Heart left ventricle (tissue), 16 donors: ENCODE measurements at regions of chr2 and their contacts with region 1.

Region 1: GRCh38 chr2:159807183-159808031 is 9.4 kb upstream of the CD302 start:
- DNase-seq: peak in 2 of 5 donors; percentile 14 to 31
- ATAC-seq: peak in 3 of 4 donors; percentile 48 to 66 (median 61)
- H3K4me3 ChIP-seq: no peak overlapping the region
- H3K27ac ChIP-seq: no peak overlapping the region
- H3K4me1 ChIP-seq: peaks cover 0 to 5% (median 0%) of the 10 kb centered on the region in 12 donors
- H3K27me3 ChIP-seq: no peaks in the 10 kb centered on the region
- CTCF ChIP-seq: peak; percentile 65 to 83 (median 74)
- POLR2A ChIP-seq: no peak

Region 2: GRCh38 chr2:159399811-159400415 is 407.5 kb before region 1 on chr2:
- intact Hi-C with region 1: loop called in 1 of 10 experiments (anchors 10 kb)
- DNase-seq: no peak
- ATAC-seq: no peak
- H3K4me3 ChIP-seq: no peak overlapping the region
- H3K27ac ChIP-seq: no peak overlapping the region
- H3K4me1 ChIP-seq: peaks cover 0 to 6% (median 0%) of the 10 kb centered on the region in 12 donors
- H3K27me3 ChIP-seq: no peaks in the 10 kb centered on the region
- CTCF ChIP-seq: no peak
- POLR2A ChIP-seq: no peak

Region 3: GRCh38 chr2:159557451-159558034 is 249.9 kb before region 1 on chr2:
- intact Hi-C with region 1: loop called in 3 of 10 experiments (anchors 5 to 10 kb)
- DNase-seq: no peak
- ATAC-seq: peak; percentile 58 to 76 (median 70)
- H3K4me3 ChIP-seq: no peak overlapping the region
- H3K27ac ChIP-seq: no peak overlapping the region
- H3K4me1 ChIP-seq: peaks cover 0 to 16% (median 1%) of the 10 kb centered on the region in 12 donors
- H3K27me3 ChIP-seq: no peaks in the 10 kb centered on the region
- CTCF ChIP-seq: peak in 10 of 12 donors; percentile 12 to 55 (median 36)
- POLR2A ChIP-seq: no peak

Region 4: DNA sequence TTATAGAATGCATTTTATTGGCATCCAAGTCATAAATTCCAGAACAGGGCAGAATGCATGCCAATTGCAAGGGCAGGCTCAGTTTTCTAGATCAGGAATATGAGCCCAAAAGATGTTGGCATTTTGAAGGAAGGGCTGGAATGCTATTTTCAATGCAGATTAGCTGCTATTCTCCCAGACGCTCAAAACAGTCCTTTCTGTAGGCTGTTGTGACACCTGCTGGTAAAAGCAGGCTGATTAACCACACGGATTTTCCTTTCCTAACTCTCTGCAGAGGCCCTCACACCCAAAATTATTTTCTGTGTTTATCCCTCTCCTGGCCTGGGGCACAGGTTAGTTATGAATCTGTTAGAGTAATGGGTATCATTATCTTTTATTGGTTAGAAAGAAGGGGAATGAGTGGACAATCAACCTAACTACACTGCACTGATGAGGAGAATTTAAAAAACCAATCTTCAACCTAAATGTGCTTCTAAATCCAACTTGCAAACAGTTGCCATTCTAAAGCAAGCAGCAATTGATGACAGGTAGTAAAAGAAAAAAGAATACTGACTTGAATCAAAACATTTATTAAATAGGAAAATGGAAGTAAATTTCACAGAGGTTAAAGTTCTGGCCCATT is 161.0 kb after region 1 on chr2:
- intact Hi-C with region 1: loop called in 3 of 10 experiments (anchors 2 to 10 kb)
- DNase-seq: peak in 3 of 5 donors; percentile 11 to 30 (median 24)
- ATAC-seq: peak in 3 of 4 donors; percentile 70 to 76 (median 72)
- H3K4me3 ChIP-seq: no peak overlapping the region
- H3K27ac ChIP-seq: no peak overlapping the region
- H3K4me1 ChIP-seq: peaks cover 0 to 5% (median 0%) of the 10 kb centered on the region in 12 donors
- H3K27me3 ChIP-seq: no peaks in the 10 kb centered on the region
- CTCF ChIP-seq: peak; percentile 43 to 72 (median 60)
- POLR2A ChIP-seq: no peak